ENCODE measurements at regions of chr5 and their contacts with region 1.

Region 1: GRCh38 chr5:97355775-97356174 is 172.7 kb upstream of the RIOK2 start:
- DNase-seq: no peak
- ATAC-seq: no peak
- H3K4me3 ChIP-seq: no peak overlapping the region
- H3K4me3 Mint-ChIP-seq: no peak overlapping the region
- H3K27ac ChIP-seq: no peak overlapping the region
- H3K27ac Mint-ChIP-seq: no peak overlapping the region
- H3K4me1 ChIP-seq: no peaks in the 10 kb centered on the region
- H3K4me1 Mint-ChIP-seq: no peaks in the 10 kb centered on the region
- H3K27me3 ChIP-seq: no peaks in the 10 kb centered on the region
- H3K27me3 Mint-ChIP-seq: no peaks in the 10 kb centered on the region
- CTCF ChIP-seq: no peak

Region 2: GRCh38 chr5:97071101-97071500 is 284.7 kb before region 1 on chr5:
- CTCF ChIA-PET with region 1: no interaction called
- POLR2A ChIA-PET with region 1: no interaction called
- intact Hi-C with region 1: no loop called
- DNase-seq: no peak
- ATAC-seq: no peak
- H3K4me3 ChIP-seq: no peak overlapping the region
- H3K4me3 Mint-ChIP-seq: no peak overlapping the region
- H3K27ac ChIP-seq: no peak overlapping the region
- H3K27ac Mint-ChIP-seq: no peak overlapping the region
- H3K4me1 ChIP-seq: no peaks in the 10 kb centered on the region
- H3K4me1 Mint-ChIP-seq: peaks cover 5% of the 10 kb centered on the region
- H3K27me3 ChIP-seq: no peaks in the 10 kb centered on the region
- H3K27me3 Mint-ChIP-seq: no peaks in the 10 kb centered on the region
- CTCF ChIP-seq: no peak

Region 3: GRCh38 chr5:97383996-97384395 is 28.2 kb after region 1 on chr5:
- CTCF ChIA-PET with region 1: no interaction called
- POLR2A ChIA-PET with region 1: no interaction called
- intact Hi-C with region 1: no loop called
- DNase-seq: no peak
- ATAC-seq: no peak
- H3K4me3 ChIP-seq: no peak overlapping the region
- H3K4me3 Mint-ChIP-seq: no peak overlapping the region
- H3K27ac ChIP-seq: no peak overlapping the region
- H3K27ac Mint-ChIP-seq: no peak overlapping the region
- H3K4me1 ChIP-seq: no peaks in the 10 kb centered on the region
- H3K4me1 Mint-ChIP-seq: no peaks in the 10 kb centered on the region
- H3K27me3 ChIP-seq: no peaks in the 10 kb centered on the region
- H3K27me3 Mint-ChIP-seq: no peaks in the 10 kb centered on the region
- CTCF ChIP-seq: no peak

Region 4: DNA sequence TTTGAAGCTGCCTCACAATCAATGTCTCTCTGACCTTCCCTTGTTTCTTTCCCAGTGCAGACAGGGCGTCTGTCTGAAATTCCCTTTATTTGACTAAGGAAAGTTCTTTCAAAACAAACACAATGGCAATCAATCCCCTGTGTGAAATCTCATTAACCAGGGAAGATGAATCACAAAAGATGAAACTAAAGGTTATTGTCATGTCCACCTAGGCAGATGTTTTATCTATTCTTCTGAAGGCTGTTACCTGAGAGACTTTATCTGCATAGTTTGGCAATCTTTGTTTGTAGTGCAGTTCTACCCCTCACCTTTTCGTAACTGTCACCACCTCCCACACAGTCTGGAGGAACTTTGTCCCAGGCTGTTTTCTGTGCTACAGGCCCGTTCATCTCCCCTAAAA is 44.8 kb after region 1 on chr5:
- CTCF ChIA-PET with region 1: no interaction called
- POLR2A ChIA-PET with region 1: no interaction called
- intact Hi-C with region 1: no loop called
- DNase-seq: no peak
- ATAC-seq: no peak
- H3K4me3 ChIP-seq: no peak overlapping the region
- H3K4me3 Mint-ChIP-seq: no peak overlapping the region
- H3K27ac ChIP-seq: no peak overlapping the region
- H3K27ac Mint-ChIP-seq: no peak overlapping the region
- H3K4me1 ChIP-seq: no peaks in the 10 kb centered on the region
- H3K4me1 Mint-ChIP-seq: no peaks in the 10 kb centered on the region
- H3K27me3 ChIP-seq: no peaks in the 10 kb centered on the region
- H3K27me3 Mint-ChIP-seq: no peaks in the 10 kb centered on the region
- CTCF ChIP-seq: no peak

Region 5: DNA sequence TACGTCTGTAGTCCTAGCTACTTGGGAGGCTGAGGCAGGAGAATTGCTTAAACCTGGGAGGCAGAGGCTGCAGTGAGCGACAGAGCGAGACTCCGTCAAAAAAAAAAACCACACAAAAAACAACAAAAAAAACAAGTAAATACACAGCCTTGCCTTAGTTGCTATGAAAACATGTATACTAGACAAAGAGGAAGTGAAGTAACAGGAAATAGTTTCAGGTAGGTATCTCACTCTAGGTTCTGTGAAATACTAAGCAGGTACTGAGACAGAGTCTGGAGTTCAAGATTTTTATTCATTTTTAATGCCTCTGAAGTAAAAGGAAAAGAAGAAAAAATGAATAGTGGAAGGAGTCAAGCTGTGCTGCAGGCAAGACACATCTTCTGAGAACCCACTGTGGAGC is 729.8 kb after region 1 on chr5:
- CTCF ChIA-PET with region 1: no interaction called
- POLR2A ChIA-PET with region 1: no interaction called
- intact Hi-C with region 1: loop called in 1 of 2 experiments (anchors 5 kb)
- DNase-seq: no peak
- ATAC-seq: no peak
- H3K4me3 ChIP-seq: no peak overlapping the region
- H3K4me3 Mint-ChIP-seq: no peak overlapping the region
- H3K27ac ChIP-seq: no peak overlapping the region
- H3K27ac Mint-ChIP-seq: no peak overlapping the region
- H3K4me1 ChIP-seq: no peaks in the 10 kb centered on the region
- H3K4me1 Mint-ChIP-seq: no peaks in the 10 kb centered on the region
- H3K27me3 ChIP-seq: no peaks in the 10 kb centered on the region
- H3K27me3 Mint-ChIP-seq: no peaks in the 10 kb centered on the region
- CTCF ChIP-seq: no peak

Measured in CD4-positive, alpha-beta T cell (primary cell).